IMR-90 (cell line): ENCODE measurements at regions of chr5 and their contacts with region 1.

Region 1: GRCh38 chr5:31944684-31945445 is 229.3 kb downstream of the GOLPH3 start:
- DNase-seq: no peak
- ATAC-seq: no peak; the same call in 1 of the 2 replicates
- H3K4me3 ChIP-seq: no peak overlapping the region
- H3K27ac ChIP-seq: no peak overlapping the region
- H3K4me1 ChIP-seq: peaks cover 3% of the 10 kb centered on the region; the same call in 1 of the 2 replicates
- H3K27me3 ChIP-seq: peaks cover 33% of the 10 kb centered on the region
- CTCF ChIP-seq: no peak
- POLR2A ChIP-seq: no peak
- RAD21 ChIP-seq: no peak

Region 2: GRCh38 chr5:31901807-31902530 is 42.9 kb before region 1 on chr5:
- CTCF ChIA-PET with region 1: interaction called, 3 read pairs
- POLR2A ChIA-PET with region 1: interaction called, 13 read pairs
- dilution Hi-C with region 1: no loop called
- in situ Hi-C with region 1: no loop called
- intact Hi-C with region 1: no loop called
- DNase-seq: no peak
- ATAC-seq: no peak
- H3K4me3 ChIP-seq: no peak overlapping the region
- H3K27ac ChIP-seq: no peak overlapping the region
- H3K4me1 ChIP-seq: no peaks in the 10 kb centered on the region
- H3K27me3 ChIP-seq: peaks cover 21% of the 10 kb centered on the region
- CTCF ChIP-seq: no peak
- POLR2A ChIP-seq: no peak
- RAD21 ChIP-seq: no peak

Region 3: DNA sequence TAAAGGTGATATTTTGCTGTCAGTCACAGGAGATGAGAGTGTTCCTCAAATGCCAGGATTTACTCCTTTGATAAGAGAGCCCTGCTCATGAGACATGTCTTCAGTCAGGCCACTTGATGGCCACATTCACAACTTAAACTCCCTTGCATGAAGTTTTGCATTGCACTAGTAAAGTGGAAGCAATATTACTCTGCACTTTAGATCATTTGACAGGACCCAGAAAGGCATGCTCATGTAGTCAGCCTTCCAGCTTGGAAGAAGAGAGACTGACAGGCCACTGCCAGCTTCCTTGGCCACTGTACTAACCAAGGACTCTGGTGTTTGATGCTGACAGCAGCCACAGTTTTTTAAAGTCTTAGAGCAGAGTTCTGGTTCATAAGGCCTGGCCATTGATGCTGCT is 808.9 kb after region 1 on chr5:
- CTCF ChIA-PET with region 1: no interaction called
- POLR2A ChIA-PET with region 1: no interaction called
- dilution Hi-C with region 1: no loop called
- in situ Hi-C with region 1: no loop called
- intact Hi-C with region 1: no loop called
- DNase-seq: peak; percentile 51
- ATAC-seq: peak; percentile 61
- H3K4me3 ChIP-seq: no peak overlapping the region
- H3K27ac ChIP-seq: peak overlapping the region; percentile 78
- H3K4me1 ChIP-seq: peaks cover 7% of the 10 kb centered on the region
- H3K27me3 ChIP-seq: no peaks in the 10 kb centered on the region
- CTCF ChIP-seq: peak; percentile 25; the same call in 1 of the 2 replicates
- POLR2A ChIP-seq: no peak
- RAD21 ChIP-seq: peak; percentile 20; the same call in 1 of the 2 replicates

Region 4: GRCh38 chr5:32785611-32786216 is 840.8 kb after region 1 on chr5:
- CTCF ChIA-PET with region 1: no interaction called
- POLR2A ChIA-PET with region 1: no interaction called
- dilution Hi-C with region 1: no loop called
- in situ Hi-C with region 1: no loop called
- intact Hi-C with region 1: no loop called
- DNase-seq: no peak
- ATAC-seq: no peak
- H3K4me3 ChIP-seq: no peak overlapping the region
- H3K27ac ChIP-seq: no peak overlapping the region
- H3K4me1 ChIP-seq: peaks cover 8% of the 10 kb centered on the region
- H3K27me3 ChIP-seq: no peaks in the 10 kb centered on the region
- CTCF ChIP-seq: no peak
- POLR2A ChIP-seq: no peak
- RAD21 ChIP-seq: no peak

Region 5: DNA sequence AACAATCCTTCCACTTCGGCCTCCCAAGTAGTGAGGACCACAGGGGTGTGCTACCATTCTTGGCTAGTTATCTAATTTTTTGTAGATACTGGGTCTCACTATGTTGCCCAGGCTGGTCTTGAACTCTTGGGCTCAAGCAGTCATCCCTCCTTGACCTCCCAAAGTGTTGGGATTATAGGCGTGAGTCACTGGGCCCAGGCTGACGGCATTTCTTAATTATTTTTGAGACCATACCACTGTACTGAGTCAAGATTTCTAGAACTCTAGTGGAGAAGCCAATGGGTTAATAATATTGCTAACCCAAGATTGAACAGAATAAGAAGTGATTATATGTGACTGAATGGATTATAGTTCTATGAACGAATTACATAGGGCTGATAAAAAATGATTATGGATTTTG is 1562.6 kb after region 1 on chr5:
- CTCF ChIA-PET with region 1: no interaction called
- POLR2A ChIA-PET with region 1: no interaction called
- dilution Hi-C with region 1: no loop called
- in situ Hi-C with region 1: no loop called
- intact Hi-C with region 1: no loop called
- DNase-seq: peak; percentile 18
- ATAC-seq: no peak
- H3K4me3 ChIP-seq: no peak overlapping the region
- H3K27ac ChIP-seq: no peak overlapping the region
- H3K4me1 ChIP-seq: peaks cover 3% of the 10 kb centered on the region
- H3K27me3 ChIP-seq: no peaks in the 10 kb centered on the region
- CTCF ChIP-seq: no peak
- POLR2A ChIP-seq: no peak
- RAD21 ChIP-seq: no peak